Tibial artery (tissue), 4 donors: ENCODE measurements at regions of chr6 and their contacts with region 1.

Region 1: GRCh38 chr6:18234564-18234963 is 29.8 kb downstream of the DEK start:
- DNase-seq: no peak
- H3K4me3 ChIP-seq: no peak overlapping the region
- H3K27ac ChIP-seq: no peak overlapping the region
- H3K4me1 ChIP-seq: no peaks in the 10 kb centered on the region
- H3K27me3 ChIP-seq: no peaks in the 10 kb centered on the region
- CTCF ChIP-seq: no peak

Region 2: DNA sequence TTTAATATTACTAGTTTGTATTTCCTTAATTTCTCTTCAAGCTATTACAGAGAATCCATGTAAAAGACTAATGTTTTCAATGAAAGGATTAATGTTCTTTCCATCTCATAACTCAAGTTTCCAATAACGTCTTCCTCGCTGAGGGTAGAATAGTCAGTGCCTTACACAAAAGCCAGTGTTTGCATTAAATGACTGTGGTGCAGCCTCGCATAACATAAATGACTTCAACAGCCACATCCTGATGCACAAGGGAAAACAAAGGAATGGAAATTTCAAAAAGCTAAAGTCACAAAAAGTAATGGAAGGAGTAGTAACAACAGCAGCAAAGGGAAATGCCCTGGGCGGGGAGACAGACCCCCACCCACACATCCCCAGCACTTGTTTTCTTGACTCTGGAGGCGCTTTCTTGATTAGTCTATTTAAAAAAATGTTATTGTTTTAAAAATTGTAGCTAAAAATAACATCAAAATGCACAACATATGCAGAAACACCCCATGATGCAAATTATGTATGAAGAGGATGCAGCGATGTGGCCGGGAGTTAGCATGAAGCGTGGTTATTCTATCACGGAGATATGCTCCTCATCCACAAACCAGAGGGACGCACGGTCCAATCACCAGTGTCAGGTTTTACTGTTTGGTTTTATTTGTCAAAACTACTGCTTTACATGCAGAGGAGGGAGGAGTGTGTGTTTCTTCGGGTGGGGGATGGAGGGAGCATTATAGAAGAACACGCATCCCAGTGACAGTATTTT is 1767.6 kb before region 1 on chr6:
- intact Hi-C with region 1: loop called (anchors 5 kb)
- DNase-seq: no peak
- H3K4me3 ChIP-seq: no peak overlapping the region
- H3K27ac ChIP-seq: no peak overlapping the region
- H3K4me1 ChIP-seq: peaks cover 0 to 6% (median 2%) of the 10 kb centered on the region in 4 donors
- H3K27me3 ChIP-seq: no peaks in the 10 kb centered on the region
- CTCF ChIP-seq: no peak

Region 3: DNA sequence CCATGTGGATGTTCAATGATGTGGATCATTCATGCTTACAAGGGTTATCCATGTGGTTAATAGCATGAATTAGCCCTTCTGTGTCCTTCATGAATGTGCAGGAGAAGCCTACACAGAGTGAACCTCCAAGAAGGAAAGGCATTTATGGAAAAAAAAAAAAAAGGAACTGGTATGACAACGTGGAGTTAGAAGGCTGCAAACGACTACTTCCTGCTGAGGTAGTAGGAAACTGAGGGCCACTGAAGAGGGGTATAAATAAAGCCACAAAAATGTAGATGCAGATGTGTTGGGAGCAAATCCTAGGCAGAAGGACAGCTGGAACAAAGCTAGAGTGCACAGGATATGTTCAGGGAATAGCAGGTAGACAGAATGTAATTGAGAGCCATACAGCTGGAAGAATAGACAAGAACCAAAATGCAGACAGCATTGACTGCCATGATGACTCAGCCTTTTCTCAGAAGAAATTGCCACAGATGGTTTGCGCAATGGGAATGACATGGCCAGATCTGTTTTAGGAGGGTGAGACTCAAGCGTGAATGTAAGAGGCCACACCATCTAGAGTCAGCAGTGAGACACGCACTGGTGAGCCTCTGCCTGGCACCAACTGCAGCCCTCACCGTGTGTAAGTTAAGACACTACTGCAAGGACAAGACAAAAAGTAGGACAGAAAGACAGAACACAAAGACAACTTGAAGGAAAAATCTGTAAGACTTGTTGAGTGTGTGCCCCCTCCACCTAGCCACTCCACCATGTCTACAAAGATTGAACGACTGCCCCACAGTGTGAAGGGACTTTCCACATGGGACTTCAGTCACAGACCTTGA is 326.9 kb before region 1 on chr6:
- intact Hi-C with region 1: no loop called
- DNase-seq: peak; percentile 89
- H3K4me3 ChIP-seq: no peak overlapping the region
- H3K27ac ChIP-seq: peak overlapping the region; percentile 1 to 26
- H3K4me1 ChIP-seq: peaks cover 0 to 82% (median 37%) of the 10 kb centered on the region in 4 donors
- H3K27me3 ChIP-seq: no peaks in the 10 kb centered on the region
- CTCF ChIP-seq: no peak